H1 (cell line): ENCODE measurements at regions of chr19 and their contacts with region 1.

Region 1: GRCh38 chr19:44954824-44955586 is at the start of gene CLPTM1:
- DNase-seq: peak; percentile 83 to 93
- H3K4me3 ChIP-seq: peak within 1 kb of the TSS; percentile 68 to 95 (median 90)
- H3K27ac ChIP-seq: peak within 1 kb of the TSS; percentile 96
- H3K4me1 ChIP-seq: peaks cover 0 to 7% (median 6%) of the 10 kb centered on the region in 4 experiments; a peak in 6 of 7 replicates
- H3K27me3 ChIP-seq: no peaks in the 10 kb centered on the region
- CTCF ChIP-seq: no peak
- EP300 ChIP-seq: no peak
- POLR2A ChIP-seq: peak; percentile 97
- RAD21 ChIP-seq: no peak
- total RNA-seq, gene CLPTM1: 84.8 and 95.8 TPM in 2 replicates

Region 2: DNA sequence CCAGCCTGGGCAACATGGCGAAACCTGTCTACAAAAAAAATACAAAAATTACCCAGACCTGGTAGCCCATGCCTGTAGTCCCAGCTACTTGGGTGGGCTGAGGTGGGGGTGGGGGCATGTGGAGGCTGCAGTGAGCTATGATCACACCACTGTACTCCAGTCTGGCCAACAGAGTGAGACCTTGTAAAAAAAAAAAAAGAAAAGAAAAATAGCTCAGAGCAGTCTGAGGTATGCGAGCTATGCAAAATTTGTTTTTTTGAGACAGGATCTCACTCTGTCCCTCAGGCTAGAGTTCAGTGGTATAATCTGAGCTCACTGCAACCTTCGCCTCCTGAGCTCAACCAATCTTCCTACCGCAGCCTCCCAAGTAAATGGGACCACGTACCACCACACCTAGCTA is 71.1 kb before region 1 on chr19:
- CTCF ChIA-PET with region 1: interaction called, 10 read pairs
- POLR2A ChIA-PET with region 1: interaction called, 5 read pairs
- DNase-seq: no peak
- H3K4me3 ChIP-seq: no peak overlapping the region
- H3K27ac ChIP-seq: no peak overlapping the region
- H3K4me1 ChIP-seq: peaks cover 0 to 11% (median 1%) of the 10 kb centered on the region in 4 experiments; a peak in 3 of 7 replicates
- H3K27me3 ChIP-seq: no peaks in the 10 kb centered on the region
- CTCF ChIP-seq: no peak
- EP300 ChIP-seq: no peak
- POLR2A ChIP-seq: no peak
- RAD21 ChIP-seq: no peak

Region 3: DNA sequence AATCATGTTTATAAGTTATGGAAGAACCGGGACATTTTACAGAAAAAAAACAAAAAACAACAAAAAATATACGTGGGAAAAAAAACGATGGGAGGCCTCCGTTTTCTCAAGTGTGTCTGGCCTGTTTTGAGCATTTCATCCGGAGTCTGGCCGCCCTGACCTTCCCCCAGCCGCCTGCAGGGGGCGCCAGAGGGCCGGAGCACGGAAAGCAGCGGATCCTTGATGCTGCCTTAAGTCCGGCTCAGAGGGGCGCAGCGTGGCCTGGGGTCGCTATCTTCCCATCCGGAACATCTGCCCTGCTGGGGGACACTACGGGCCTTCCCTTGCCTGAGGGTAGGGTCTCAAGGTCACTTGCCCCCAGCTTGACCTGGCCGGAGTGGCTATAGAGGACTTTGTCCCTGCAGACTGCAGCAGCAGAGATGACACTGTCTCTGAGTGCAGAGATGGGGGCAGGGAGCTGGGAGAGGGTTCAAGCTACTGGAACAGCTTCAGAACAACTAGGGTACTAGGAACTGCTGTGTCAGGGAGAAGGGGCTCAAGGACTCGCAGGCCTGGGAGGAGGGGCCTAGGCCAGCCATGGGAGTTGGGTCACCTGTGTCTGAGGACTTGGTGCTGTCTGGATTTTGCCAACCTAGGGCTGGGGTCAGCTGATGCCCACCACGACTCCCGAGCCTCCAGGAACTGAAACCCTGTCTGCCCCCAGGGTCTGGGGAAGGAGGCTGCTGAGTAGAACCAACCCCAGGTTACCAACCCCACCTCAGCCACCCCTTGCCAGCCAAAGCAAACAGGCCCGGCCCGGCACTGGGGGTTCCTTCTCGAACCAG is 51.2 kb before region 1 on chr19:
- CTCF ChIA-PET with region 1: interaction called, 201 read pairs
- POLR2A ChIA-PET with region 1: interaction called, 121 read pairs
- DNase-seq: peak; percentile 58 to 98
- H3K4me3 ChIP-seq: no peak overlapping the region
- H3K27ac ChIP-seq: no peak overlapping the region
- H3K4me1 ChIP-seq: peaks cover 0 to 8% (median 7%) of the 10 kb centered on the region in 4 experiments; a peak in 6 of 7 replicates
- H3K27me3 ChIP-seq: no peaks in the 10 kb centered on the region
- CTCF ChIP-seq: peak; percentile 94 to 95 (median 94)
- EP300 ChIP-seq: no peak
- POLR2A ChIP-seq: peak in 1 of 2 experiments; percentile 79; a peak in 2 of 3 replicates
- RAD21 ChIP-seq: peak; percentile 83 to 88

Region 4: GRCh38 chr19:44912854-44913253 is 42.2 kb before region 1 on chr19:
- CTCF ChIA-PET with region 1: interaction called, 201 read pairs
- POLR2A ChIA-PET with region 1: interaction called, 30 read pairs
- DNase-seq: no peak
- H3K4me3 ChIP-seq: no peak overlapping the region
- H3K27ac ChIP-seq: no peak overlapping the region
- H3K4me1 ChIP-seq: peaks cover 4 to 17% (median 6%) of the 10 kb centered on the region in 4 experiments
- H3K27me3 ChIP-seq: no peaks in the 10 kb centered on the region
- CTCF ChIP-seq: no peak
- EP300 ChIP-seq: no peak
- POLR2A ChIP-seq: no peak
- RAD21 ChIP-seq: no peak

Region 5: GRCh38 chr19:44939668-44940067 is 15.3 kb before region 1 on chr19:
- CTCF ChIA-PET with region 1: interaction called, 23 read pairs
- POLR2A ChIA-PET with region 1: interaction called, 6 read pairs
- DNase-seq: no peak
- H3K4me3 ChIP-seq: no peak overlapping the region
- H3K27ac ChIP-seq: no peak overlapping the region
- H3K4me1 ChIP-seq: no peaks in the 10 kb centered on the region
- H3K27me3 ChIP-seq: no peaks in the 10 kb centered on the region
- CTCF ChIP-seq: no peak
- EP300 ChIP-seq: no peak
- POLR2A ChIP-seq: no peak
- RAD21 ChIP-seq: no peak

Region 6: DNA sequence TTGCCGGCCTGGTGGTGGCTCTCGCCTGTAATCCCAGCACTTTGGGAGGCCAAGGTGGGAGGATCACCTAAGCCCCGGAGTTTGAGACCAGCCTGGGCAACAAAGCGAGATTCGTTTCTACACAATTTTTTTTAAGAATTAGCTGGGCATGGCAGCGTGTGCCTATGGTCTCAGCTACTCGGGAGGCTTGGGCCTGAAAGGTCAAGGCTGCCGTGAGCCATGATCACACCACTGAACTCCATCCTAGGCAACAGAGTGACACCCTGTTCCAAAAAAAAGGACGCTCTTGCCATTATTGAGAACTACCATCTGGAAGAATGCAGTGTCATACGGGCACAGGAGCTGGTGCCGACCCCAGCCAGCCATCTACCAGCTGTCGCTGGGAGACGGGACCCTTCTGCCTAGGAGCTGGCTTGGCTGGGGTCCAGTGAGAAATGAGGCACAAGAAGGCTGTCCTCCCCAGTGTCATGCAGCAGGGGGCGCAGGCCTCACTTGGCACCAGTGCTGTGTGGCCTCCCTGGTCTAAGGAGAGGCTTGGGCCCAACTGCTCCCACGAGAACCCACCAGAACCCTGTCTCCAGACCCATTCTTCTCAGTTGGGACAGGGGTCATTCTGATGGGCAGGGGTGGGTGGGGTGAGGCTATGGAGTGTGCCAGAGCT is 34.0 kb after region 1 on chr19:
- CTCF ChIA-PET with region 1: interaction called, 17 read pairs
- POLR2A ChIA-PET with region 1: interaction called, 3 read pairs
- DNase-seq: peak in 1 of 2 experiments; percentile 87
- H3K4me3 ChIP-seq: no peak overlapping the region
- H3K27ac ChIP-seq: no peak overlapping the region
- H3K4me1 ChIP-seq: no peaks in the 10 kb centered on the region
- H3K27me3 ChIP-seq: no peaks in the 10 kb centered on the region
- CTCF ChIP-seq: peak; percentile 81 to 95 (median 89)
- EP300 ChIP-seq: no peak
- POLR2A ChIP-seq: no peak
- RAD21 ChIP-seq: peak; percentile 59 to 69; a peak in 3 of 4 replicates

Region 7: DNA sequence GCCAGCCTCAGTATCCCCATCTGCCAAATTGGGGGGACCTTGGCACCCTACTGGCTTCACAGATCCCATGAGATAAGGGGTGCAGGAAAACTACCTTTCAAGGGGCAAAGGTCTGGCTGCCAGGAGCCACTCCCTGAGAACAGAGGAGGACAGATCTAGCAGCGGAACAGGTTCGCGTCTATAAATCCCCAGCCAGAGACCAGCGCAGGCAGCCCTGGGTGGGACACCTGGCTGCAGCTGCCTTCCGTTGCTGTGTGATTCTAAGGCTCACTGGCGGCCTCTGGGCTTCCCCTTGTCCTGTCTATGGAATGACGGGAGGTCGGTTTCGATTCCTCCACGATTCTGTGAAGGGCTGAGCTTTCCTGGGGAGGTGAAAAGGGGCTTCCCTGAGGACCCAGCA is 53.5 kb after region 1 on chr19:
- CTCF ChIA-PET with region 1: no interaction called
- POLR2A ChIA-PET with region 1: no interaction called
- DNase-seq: no peak
- H3K4me3 ChIP-seq: no peak overlapping the region
- H3K27ac ChIP-seq: no peak overlapping the region
- H3K4me1 ChIP-seq: no peaks in the 10 kb centered on the region
- H3K27me3 ChIP-seq: no peaks in the 10 kb centered on the region
- CTCF ChIP-seq: no peak
- EP300 ChIP-seq: no peak
- POLR2A ChIP-seq: no peak
- RAD21 ChIP-seq: no peak

Region 8: GRCh38 chr19:45032421-45032820 is 77.4 kb after region 1 on chr19:
- CTCF ChIA-PET with region 1: no interaction called
- POLR2A ChIA-PET with region 1: no interaction called
- DNase-seq: no peak
- H3K4me3 ChIP-seq: no peak overlapping the region
- H3K27ac ChIP-seq: no peak overlapping the region
- H3K4me1 ChIP-seq: no peaks in the 10 kb centered on the region
- H3K27me3 ChIP-seq: no peaks in the 10 kb centered on the region
- CTCF ChIP-seq: no peak
- EP300 ChIP-seq: no peak
- POLR2A ChIP-seq: no peak
- RAD21 ChIP-seq: no peak

Region 9: DNA sequence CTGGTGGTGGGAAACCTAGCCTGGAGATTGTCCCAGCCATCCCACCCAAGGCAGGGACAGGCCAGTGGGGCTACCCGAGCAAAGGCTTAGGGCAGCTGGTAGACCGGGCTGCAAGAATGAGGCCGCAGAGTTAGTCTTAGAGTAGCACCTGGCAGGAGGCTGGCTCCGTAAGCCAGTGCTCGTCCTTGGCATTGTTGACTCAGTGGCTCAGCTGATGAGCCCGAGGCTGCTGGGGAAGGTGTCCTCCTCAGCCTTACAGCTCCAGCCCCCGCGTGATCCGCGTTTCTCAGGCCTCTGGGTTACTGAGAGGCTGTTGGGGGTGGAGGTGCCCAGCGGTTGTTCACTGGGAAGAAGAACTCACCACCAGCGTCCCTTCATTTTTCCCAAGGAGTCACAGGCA is 162.7 kb after region 1 on chr19:
- CTCF ChIA-PET with region 1: no interaction called
- POLR2A ChIA-PET with region 1: no interaction called
- DNase-seq: no peak
- H3K4me3 ChIP-seq: no peak overlapping the region
- H3K27ac ChIP-seq: no peak overlapping the region
- H3K4me1 ChIP-seq: peaks cover 0 to 21% (median 3%) of the 10 kb centered on the region in 4 experiments; a peak in 6 of 7 replicates
- H3K27me3 ChIP-seq: no peaks in the 10 kb centered on the region
- CTCF ChIP-seq: no peak
- EP300 ChIP-seq: no peak
- POLR2A ChIP-seq: no peak
- RAD21 ChIP-seq: no peak